CD4-positive, alpha-beta T cell (primary cell): ENCODE measurements at regions of chr10 and their contacts with region 1.

Region 1: GRCh38 chr10:3835770-3836169 is 50.8 kb upstream of the KLF6 start:
- DNase-seq: peak in 2 of 14 experiments; percentile 58 to 69
- ATAC-seq: no peak
- H3K4me3 ChIP-seq: no peak overlapping the region
- H3K4me3 Mint-ChIP-seq: peak overlapping the region; percentile 3
- H3K27ac ChIP-seq: no peak overlapping the region
- H3K27ac Mint-ChIP-seq: no peak overlapping the region
- H3K4me1 ChIP-seq: peaks cover 11% of the 10 kb centered on the region
- H3K4me1 Mint-ChIP-seq: peaks cover 7% of the 10 kb centered on the region
- H3K27me3 ChIP-seq: no peaks in the 10 kb centered on the region
- H3K27me3 Mint-ChIP-seq: no peaks in the 10 kb centered on the region
- CTCF ChIP-seq: no peak

Region 2: DNA sequence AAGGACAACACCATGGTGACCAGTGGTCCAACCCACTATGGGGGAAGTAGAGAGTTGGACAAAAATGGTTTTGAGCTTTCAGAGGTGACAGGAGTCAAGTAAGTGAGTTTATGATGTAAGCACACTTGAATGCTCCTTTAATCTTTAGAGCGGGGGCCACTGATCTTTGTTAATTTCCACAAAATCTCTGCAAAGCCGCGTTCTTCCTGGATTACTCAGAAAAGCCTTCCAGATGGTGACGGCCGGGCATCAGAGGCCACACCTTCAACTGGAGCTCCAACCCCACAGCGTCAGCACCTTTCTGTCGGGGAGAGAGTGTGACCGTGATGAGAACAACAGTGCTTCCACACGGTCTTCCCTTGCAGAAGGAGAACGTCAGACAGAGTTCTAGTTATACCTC is 15.5 kb before region 1 on chr10:
- CTCF ChIA-PET with region 1: no interaction called
- POLR2A ChIA-PET with region 1: no interaction called
- intact Hi-C with region 1: loop called in 1 of 2 experiments (anchors 2 kb)
- DNase-seq: no peak
- ATAC-seq: no peak
- H3K4me3 ChIP-seq: no peak overlapping the region
- H3K4me3 Mint-ChIP-seq: no peak overlapping the region
- H3K27ac ChIP-seq: no peak overlapping the region
- H3K27ac Mint-ChIP-seq: no peak overlapping the region
- H3K4me1 ChIP-seq: peaks cover 2% of the 10 kb centered on the region
- H3K4me1 Mint-ChIP-seq: peaks cover 4% of the 10 kb centered on the region
- H3K27me3 ChIP-seq: no peaks in the 10 kb centered on the region
- H3K27me3 Mint-ChIP-seq: no peaks in the 10 kb centered on the region
- CTCF ChIP-seq: no peak